Naive thymus-derived CD4-positive, alpha-beta T cell (primary cell): ENCODE measurements at regions of chr9 and their contacts with region 1.

Region 1: DNA sequence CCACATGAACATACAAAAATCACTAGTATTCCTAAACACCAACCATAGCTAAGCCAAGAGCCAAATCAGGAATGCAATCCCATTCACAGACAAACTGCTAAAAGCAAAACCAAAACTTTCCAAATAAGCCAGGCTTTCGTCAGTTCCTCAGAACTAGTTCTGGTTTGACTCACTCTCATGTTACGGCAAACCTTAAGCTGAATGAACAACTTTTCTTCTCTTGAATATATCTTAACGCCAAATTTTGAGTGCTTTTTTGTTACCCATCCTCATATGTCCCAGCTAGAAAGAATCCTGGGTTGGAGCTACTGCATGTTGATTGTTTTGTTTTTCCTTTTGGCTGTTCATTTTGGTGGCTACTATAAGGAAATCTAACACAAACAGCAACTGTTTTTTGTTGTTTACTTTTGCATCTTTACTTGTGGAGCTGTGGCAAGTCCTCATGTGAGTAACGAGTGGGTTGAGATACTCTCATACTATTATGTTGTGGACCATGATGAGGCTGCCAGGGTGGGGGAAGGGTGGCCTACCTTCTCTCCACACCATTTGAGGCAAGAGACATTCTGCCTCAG is at the start of gene PDCD1LG2:
- DNase-seq: peak in 1 of 9 donors; percentile 56
- ATAC-seq: peak; percentile 67
- H3K4me3 ChIP-seq: peak within 1 kb of the TSS; percentile 24
- H3K4me3 Mint-ChIP-seq: peak within 1 kb of the TSS; percentile 43 to 91 (median 66)
- H3K27ac ChIP-seq: no peak within 1 kb of the TSS
- H3K27ac Mint-ChIP-seq: peak within 1 kb of the TSS; percentile 63 to 97 (median 82)
- H3K4me1 ChIP-seq: peaks cover 0 to 8% of the 10 kb centered on the region in 2 donors
- H3K4me1 Mint-ChIP-seq: peaks cover 16 to 59% (median 18%) of the 10 kb centered on the region in 7 donors
- H3K27me3 ChIP-seq: no peaks in the 10 kb centered on the region
- H3K27me3 Mint-ChIP-seq: peaks cover 0 to 2% (median 0%) of the 10 kb centered on the region in 5 donors
- total RNA-seq, gene PDCD1LG2: 0.16 to 7.4 (median 0.32) TPM

Region 2: DNA sequence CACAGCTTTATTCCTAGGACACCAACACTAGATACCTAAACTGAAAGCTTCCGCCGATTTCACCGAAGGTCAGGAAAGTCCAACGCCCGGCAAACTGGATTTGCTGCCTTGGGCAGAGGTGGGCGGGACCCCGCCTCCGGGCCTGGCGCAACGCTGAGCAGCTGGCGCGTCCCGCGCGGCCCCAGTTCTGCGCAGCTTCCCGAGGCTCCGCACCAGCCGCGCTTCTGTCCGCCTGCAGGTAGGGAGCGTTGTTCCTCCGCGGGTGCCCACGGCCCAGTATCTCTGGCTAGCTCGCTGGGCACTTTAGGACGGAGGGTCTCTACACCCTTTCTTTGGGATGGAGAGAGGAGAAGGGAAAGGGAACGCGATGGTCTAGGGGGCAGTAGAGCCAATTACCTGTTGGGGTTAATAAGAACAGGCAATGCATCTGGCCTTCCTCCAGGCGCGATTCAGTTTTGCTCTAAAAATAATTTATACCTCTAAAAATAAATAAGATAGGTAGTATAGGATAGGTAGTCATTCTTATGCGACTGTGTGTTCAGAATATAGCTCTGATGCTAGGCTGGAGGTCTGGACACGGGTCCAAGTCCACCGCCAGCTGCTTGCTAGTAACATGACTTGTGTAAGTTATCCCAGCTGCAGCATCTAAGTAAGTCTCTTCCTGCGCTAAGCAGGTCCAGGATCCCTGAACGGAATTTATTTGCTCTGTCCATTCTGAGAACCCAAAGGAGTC is 59.9 kb before region 1 on chr9 and contains the start of gene CD274:
- CTCF ChIA-PET with region 1: no interaction called
- POLR2A ChIA-PET with region 1: interaction called, 3 read pairs
- intact Hi-C with region 1: loop called in 1 of 2 experiments (anchors 1 kb)
- DNase-seq: peak; percentile 61 to 89 (median 80)
- ATAC-seq: peak; percentile 95
- H3K4me3 ChIP-seq: peak within 1 kb of the TSS; percentile 78
- H3K4me3 Mint-ChIP-seq: peak within 1 kb of the TSS; percentile 92 to 98 (median 95)
- H3K27ac ChIP-seq: peak within 1 kb of the TSS; percentile 94
- H3K27ac Mint-ChIP-seq: peak within 1 kb of the TSS; percentile 97 to 99 (median 98)
- H3K4me1 ChIP-seq: peaks cover 0 to 11% of the 10 kb centered on the region in 2 donors
- H3K4me1 Mint-ChIP-seq: peaks cover 33 to 69% (median 62%) of the 10 kb centered on the region in 7 donors
- H3K27me3 ChIP-seq: no peaks in the 10 kb centered on the region
- H3K27me3 Mint-ChIP-seq: no peaks in the 10 kb centered on the region
- total RNA-seq, gene CD274: 2.9 to 38.7 (median 7.8) TPM

Region 3: GRCh38 chr9:5459289-5459829 is 51.1 kb before region 1 on chr9:
- CTCF ChIA-PET with region 1: no interaction called
- POLR2A ChIA-PET with region 1: interaction called, 3 read pairs
- intact Hi-C with region 1: loop called in 1 of 2 experiments (anchors 2 kb)
- DNase-seq: peak in 1 of 9 donors; percentile 37
- ATAC-seq: peak; percentile 64
- H3K4me3 ChIP-seq: no peak overlapping the region
- H3K4me3 Mint-ChIP-seq: peak overlapping the region in 1 of 10 donors; percentile 66
- H3K27ac ChIP-seq: no peak overlapping the region
- H3K27ac Mint-ChIP-seq: peak overlapping the region in 2 of 9 donors; percentile 22 to 78
- H3K4me1 ChIP-seq: no peaks in the 10 kb centered on the region
- H3K4me1 Mint-ChIP-seq: peaks cover 8 to 55% (median 9%) of the 10 kb centered on the region in 7 donors
- H3K27me3 ChIP-seq: no peaks in the 10 kb centered on the region
- H3K27me3 Mint-ChIP-seq: no peaks in the 10 kb centered on the region

Region 4: DNA sequence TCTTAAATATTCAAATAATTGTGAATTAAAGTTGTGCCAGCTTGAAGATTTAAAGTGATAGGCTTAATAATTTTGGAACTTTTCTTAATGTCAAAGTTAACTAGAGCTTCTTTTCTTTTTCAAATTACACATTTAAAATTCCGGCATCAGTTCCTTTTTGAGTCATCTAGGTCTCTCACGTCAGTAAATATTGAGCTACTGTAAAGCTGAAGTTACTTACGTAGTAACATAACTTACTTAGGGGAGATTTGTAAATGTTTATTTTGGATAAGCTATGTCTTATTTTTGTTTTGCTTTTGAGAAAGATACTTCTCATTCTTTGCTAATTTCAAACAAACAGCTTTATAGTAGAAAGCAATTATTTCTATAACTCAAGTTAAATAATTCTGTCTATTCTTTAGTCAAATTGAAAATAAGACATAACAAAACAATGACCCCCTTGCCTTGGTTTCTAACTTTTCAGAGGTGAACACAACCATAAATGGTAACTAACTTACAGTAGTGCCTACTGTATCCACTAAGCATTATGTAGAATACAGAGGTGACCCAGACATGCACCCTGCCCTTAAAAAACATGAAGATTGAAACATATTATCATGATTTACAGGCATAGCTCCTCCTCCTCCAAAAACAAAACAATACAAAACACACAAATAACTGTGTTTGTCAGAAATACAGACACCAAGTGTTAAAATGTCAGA is 30.3 kb before region 1 on chr9:
- CTCF ChIA-PET with region 1: no interaction called
- POLR2A ChIA-PET with region 1: no interaction called
- intact Hi-C with region 1: loop called (anchors 2 to 5 kb)
- DNase-seq: no peak
- ATAC-seq: no peak
- H3K4me3 ChIP-seq: no peak overlapping the region
- H3K4me3 Mint-ChIP-seq: no peak overlapping the region
- H3K27ac ChIP-seq: no peak overlapping the region
- H3K27ac Mint-ChIP-seq: no peak overlapping the region
- H3K4me1 ChIP-seq: no peaks in the 10 kb centered on the region
- H3K4me1 Mint-ChIP-seq: peaks cover 0 to 3% (median 0%) of the 10 kb centered on the region in 7 donors
- H3K27me3 ChIP-seq: no peaks in the 10 kb centered on the region
- H3K27me3 Mint-ChIP-seq: peaks cover 0 to 3% (median 0%) of the 10 kb centered on the region in 5 donors

Region 5: GRCh38 chr9:5485378-5486085 is 24.9 kb before region 1 on chr9:
- CTCF ChIA-PET with region 1: no interaction called
- POLR2A ChIA-PET with region 1: no interaction called
- intact Hi-C with region 1: loop called in 1 of 2 experiments (anchors 2 kb)
- DNase-seq: no peak
- ATAC-seq: peak; percentile 70
- H3K4me3 ChIP-seq: no peak overlapping the region
- H3K4me3 Mint-ChIP-seq: no peak overlapping the region
- H3K27ac ChIP-seq: no peak overlapping the region
- H3K27ac Mint-ChIP-seq: no peak overlapping the region
- H3K4me1 ChIP-seq: no peaks in the 10 kb centered on the region
- H3K4me1 Mint-ChIP-seq: peaks cover 0 to 3% (median 0%) of the 10 kb centered on the region in 7 donors
- H3K27me3 ChIP-seq: no peaks in the 10 kb centered on the region
- H3K27me3 Mint-ChIP-seq: peaks cover 0 to 7% (median 0%) of the 10 kb centered on the region in 5 donors

Region 6: DNA sequence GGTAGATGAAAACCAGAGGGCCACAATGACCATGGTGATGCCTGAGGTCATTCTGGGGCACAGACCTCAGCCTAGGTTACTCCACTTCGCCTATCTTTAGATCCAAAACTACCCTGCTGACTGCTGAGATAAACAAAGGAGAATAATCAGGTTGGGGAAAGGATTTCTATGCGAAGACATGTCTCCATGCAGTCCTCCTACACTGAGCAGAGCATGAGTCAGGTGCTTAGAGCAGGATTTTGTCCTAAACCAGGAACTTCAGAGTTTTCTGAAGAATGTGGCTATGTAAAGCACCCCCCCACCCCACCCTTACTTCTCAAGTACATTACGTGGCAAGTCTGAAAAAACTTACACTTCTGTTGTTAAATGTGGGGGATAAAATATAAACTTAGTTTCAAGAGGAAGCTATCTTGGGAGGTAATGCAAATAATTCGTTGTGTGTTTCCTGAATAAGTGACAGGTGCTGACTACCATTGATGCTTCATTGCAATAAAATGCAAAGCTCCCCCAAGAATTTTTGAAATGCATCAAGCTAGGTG is 19.3 kb after region 1 on chr9:
- CTCF ChIA-PET with region 1: no interaction called
- POLR2A ChIA-PET with region 1: interaction called, 3 read pairs
- intact Hi-C with region 1: loop called (anchors 1 to 2 kb)
- DNase-seq: no peak
- ATAC-seq: no peak
- H3K4me3 ChIP-seq: no peak overlapping the region
- H3K4me3 Mint-ChIP-seq: no peak overlapping the region
- H3K27ac ChIP-seq: no peak overlapping the region
- H3K27ac Mint-ChIP-seq: peak overlapping the region in 6 of 9 donors; percentile 5 to 72 (median 28)
- H3K4me1 ChIP-seq: peaks cover 19 to 32% of the 10 kb centered on the region in 2 donors
- H3K4me1 Mint-ChIP-seq: peaks cover 20 to 50% (median 42%) of the 10 kb centered on the region in 7 donors
- H3K27me3 ChIP-seq: no peaks in the 10 kb centered on the region
- H3K27me3 Mint-ChIP-seq: no peaks in the 10 kb centered on the region

Region 7: GRCh38 chr9:5557606-5558587 is 47.5 kb after region 1 on chr9:
- CTCF ChIA-PET with region 1: no interaction called
- POLR2A ChIA-PET with region 1: interaction called, 4 read pairs
- intact Hi-C with region 1: loop called in 1 of 2 experiments (anchors 1 kb)
- DNase-seq: peak; percentile 20 to 73 (median 61)
- ATAC-seq: peak; percentile 97
- H3K4me3 ChIP-seq: peak overlapping the region; percentile 24
- H3K4me3 Mint-ChIP-seq: peak overlapping the region; percentile 58 to 79 (median 68)
- H3K27ac ChIP-seq: peak overlapping the region; percentile 68
- H3K27ac Mint-ChIP-seq: peak overlapping the region; percentile 87 to 98 (median 94)
- H3K4me1 ChIP-seq: peaks cover 24 to 31% of the 10 kb centered on the region in 2 donors
- H3K4me1 Mint-ChIP-seq: peaks cover 32 to 59% (median 53%) of the 10 kb centered on the region in 7 donors
- H3K27me3 ChIP-seq: no peaks in the 10 kb centered on the region
- H3K27me3 Mint-ChIP-seq: no peaks in the 10 kb centered on the region